ENCODE measurements at regions of chr17 and their contacts with region 1.

Region 1: GRCh38 chr17:82909322-82909904 is 69.6 kb upstream of the ZNF750 start:
- DNase-seq: no peak
- H3K4me3 ChIP-seq: no peak overlapping the region
- H3K27ac ChIP-seq: no peak overlapping the region
- H3K4me1 ChIP-seq: peaks cover 0 to 9% (median 2%) of the 10 kb centered on the region in 4 donors
- H3K27me3 ChIP-seq: no peaks in the 10 kb centered on the region
- CTCF ChIP-seq: no peak

Region 2: GRCh38 chr17:81859906-81860755 is 1049.3 kb before region 1 on chr17 and contains the start of gene P4HB:
- intact Hi-C with region 1: loop called (anchors 5 kb)
- DNase-seq: peak in 1 of 2 donors; percentile 54
- H3K4me3 ChIP-seq: peak within 1 kb of the TSS; percentile 88 to 96
- H3K27ac ChIP-seq: peak within 1 kb of the TSS; percentile 94 to 97
- H3K4me1 ChIP-seq: peaks cover 0 to 59% (median 36%) of the 10 kb centered on the region in 4 donors
- H3K27me3 ChIP-seq: no peaks in the 10 kb centered on the region
- CTCF ChIP-seq: no peak

Region 3: DNA sequence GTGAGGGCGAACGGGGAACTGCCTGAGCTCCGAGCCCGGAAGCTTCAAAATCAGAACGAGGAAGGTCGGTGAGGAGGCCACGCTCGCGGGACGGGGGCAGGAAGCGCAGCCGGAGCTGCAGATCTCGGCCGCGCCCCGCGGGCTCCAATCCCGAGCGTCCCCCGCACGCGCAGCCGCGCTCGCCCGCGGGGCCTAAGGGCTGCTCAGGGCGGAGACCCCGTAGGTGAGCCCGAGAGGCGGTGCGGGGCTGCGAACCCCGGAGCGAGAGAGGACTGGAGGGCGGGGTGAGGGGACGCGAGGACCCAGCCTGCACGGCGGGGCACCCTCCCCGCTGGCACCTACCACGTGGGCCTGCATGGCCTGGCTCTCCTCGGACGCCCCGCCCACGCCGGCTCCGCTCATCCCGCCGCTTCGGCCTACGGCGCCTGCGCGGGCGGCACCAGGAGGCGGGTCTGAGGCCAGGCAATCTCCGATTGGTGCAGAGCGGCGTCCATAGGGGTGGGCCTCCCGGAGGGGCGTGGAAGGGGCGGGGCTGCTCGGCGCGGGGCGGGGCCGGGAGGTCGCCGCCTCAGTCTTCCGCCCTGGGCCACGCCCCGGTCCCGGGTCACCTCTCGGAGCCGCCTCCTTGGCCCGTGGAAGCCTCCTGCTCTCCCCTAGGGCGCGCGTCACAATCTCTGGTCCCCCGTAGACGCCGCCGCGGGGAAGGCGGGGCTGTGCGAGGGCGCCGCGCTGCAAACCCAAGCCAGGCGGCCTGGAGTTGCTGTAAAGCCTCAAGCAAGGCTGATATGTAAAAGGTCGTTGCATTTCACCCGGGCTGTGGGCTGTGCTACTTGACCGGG is 142.2 kb after region 1 on chr17:
- intact Hi-C with region 1: no loop called
- DNase-seq: peak; percentile 97 to 99
- H3K4me3 ChIP-seq: peak overlapping the region; percentile 72 to 97
- H3K27ac ChIP-seq: peak overlapping the region; percentile 76 to 87
- H3K4me1 ChIP-seq: peaks cover 0 to 31% (median 24%) of the 10 kb centered on the region in 4 donors
- H3K27me3 ChIP-seq: no peaks in the 10 kb centered on the region
- CTCF ChIP-seq: peak in 1 of 2 experiments; percentile 5

Measured in tibial artery (tissue), 4 donors.